PC-3 (cell line): ENCODE measurements at regions of chr16 and their contacts with region 1.

Region 1: GRCh38 chr16:61460020-61460419 is 576.2 kb downstream of the CDH8 start:
- DNase-seq: no peak
- ATAC-seq: no peak
- H3K4me3 ChIP-seq: no peak overlapping the region
- H3K27ac ChIP-seq: no peak overlapping the region
- H3K4me1 ChIP-seq: no peaks in the 10 kb centered on the region
- H3K27me3 ChIP-seq: no peaks in the 10 kb centered on the region
- CTCF ChIP-seq: no peak

Region 2: DNA sequence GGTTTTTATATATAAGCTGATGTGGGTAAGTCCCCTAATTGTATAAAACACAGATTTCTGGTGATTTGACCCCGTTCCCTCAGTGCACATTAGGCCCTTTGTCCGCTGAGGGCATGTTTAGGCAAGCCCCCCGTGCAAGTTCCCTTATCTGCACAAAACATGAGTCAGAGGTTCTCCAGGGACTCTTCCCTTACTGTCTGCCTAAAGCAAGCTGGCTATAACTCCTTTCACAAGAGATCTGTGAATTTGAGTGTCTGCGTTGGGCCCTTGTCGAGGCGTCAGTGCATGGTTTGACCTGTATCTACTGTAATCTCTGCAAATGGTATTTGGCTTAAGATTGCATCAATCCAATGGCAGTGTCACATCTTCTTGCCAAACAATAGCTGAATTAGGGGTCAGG is 136.6 kb before region 1 on chr16:
- CTCF ChIA-PET with region 1: no interaction called
- POLR2A ChIA-PET with region 1: no interaction called
- intact Hi-C with region 1: no loop called
- DNase-seq: no peak
- ATAC-seq: no peak
- H3K4me3 ChIP-seq: no peak overlapping the region
- H3K27ac ChIP-seq: no peak overlapping the region
- H3K4me1 ChIP-seq: no peaks in the 10 kb centered on the region
- H3K27me3 ChIP-seq: no peaks in the 10 kb centered on the region
- CTCF ChIP-seq: no peak

Region 3: DNA sequence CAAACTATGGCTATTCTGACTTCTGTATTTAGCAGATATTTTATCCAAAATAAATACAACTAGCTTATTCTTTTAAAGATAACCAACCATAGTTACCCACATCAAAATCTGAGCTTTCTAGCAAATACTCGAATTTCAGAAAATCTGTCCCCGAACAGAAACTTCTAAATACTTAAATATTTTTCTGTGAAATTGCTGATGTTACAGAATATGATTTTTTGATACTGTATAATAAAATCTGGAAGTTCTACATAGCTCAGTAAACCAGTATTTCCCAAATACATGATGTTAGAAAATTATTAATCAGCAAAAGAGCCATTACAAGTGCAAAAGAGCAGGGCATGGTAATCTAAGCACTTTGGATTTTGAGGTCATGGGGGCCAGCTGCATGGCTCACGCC is 461.4 kb after region 1 on chr16:
- CTCF ChIA-PET with region 1: no interaction called
- POLR2A ChIA-PET with region 1: interaction called, 23 read pairs
- intact Hi-C with region 1: no loop called
- DNase-seq: no peak
- ATAC-seq: no peak
- H3K4me3 ChIP-seq: no peak overlapping the region
- H3K27ac ChIP-seq: no peak overlapping the region
- H3K4me1 ChIP-seq: peaks cover 13% of the 10 kb centered on the region
- H3K27me3 ChIP-seq: no peaks in the 10 kb centered on the region
- CTCF ChIP-seq: no peak